Caco-2 (cell line): ENCODE measurements at regions of chrX and their contacts with region 1.

Region 1: DNA sequence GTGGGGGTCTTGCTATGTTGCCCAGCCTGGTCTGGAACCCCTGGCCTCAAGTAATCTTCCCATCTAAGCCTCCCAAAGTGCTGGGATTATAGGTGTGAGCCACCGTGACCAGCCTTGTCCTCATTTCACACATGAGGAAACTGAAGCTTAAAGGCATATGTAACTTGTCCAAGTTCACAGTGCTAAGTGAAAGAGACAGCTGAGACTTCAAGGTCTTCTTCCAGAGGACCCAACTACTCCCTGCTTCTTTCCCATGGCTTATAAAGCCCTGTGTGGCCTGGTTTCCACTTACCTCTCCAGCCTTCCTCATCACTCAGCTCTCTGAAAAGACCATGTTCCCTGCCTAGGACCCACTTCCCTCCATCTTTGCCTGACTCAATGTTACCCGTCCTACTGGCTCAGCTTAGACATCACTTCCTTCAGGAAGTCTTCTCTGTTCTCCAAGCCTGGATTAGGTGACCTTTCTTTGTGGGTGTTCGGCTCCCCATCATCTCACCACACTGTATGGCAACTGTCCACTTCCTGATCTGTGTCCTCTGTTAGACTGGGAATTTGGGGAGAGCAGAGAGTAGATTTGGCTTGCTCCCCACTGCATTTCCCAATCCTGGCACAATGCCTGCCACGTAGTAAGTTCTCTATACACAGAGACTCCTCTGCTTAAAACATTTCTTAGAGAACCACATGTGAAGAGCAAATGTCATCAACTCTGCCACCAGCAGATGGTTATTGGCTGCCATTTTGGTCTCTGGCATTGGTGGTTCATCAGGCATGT is 30.4 kb upstream of the LAMP2 start:
- DNase-seq: no peak
- H3K4me3 ChIP-seq: no peak overlapping the region
- H3K4me3 Mint-ChIP-seq: no peak overlapping the region
- H3K27ac Mint-ChIP-seq: no peak overlapping the region
- H3K4me1 ChIP-seq: no peaks in the 10 kb centered on the region
- H3K4me1 Mint-ChIP-seq: peaks cover 7% of the 10 kb centered on the region
- H3K27me3 ChIP-seq: no peaks in the 10 kb centered on the region
- H3K27me3 Mint-ChIP-seq: no peaks in the 10 kb centered on the region
- CTCF ChIP-seq: no peak

Region 2: GRCh38 chrX:120358737-120359456 is 140.6 kb before region 1 on chrX:
- CTCF ChIA-PET with region 1: no interaction called
- POLR2A ChIA-PET with region 1: no interaction called
- intact Hi-C with region 1: no loop called
- DNase-seq: no peak
- H3K4me3 ChIP-seq: no peak overlapping the region
- H3K4me3 Mint-ChIP-seq: no peak overlapping the region
- H3K27ac Mint-ChIP-seq: no peak overlapping the region
- H3K4me1 ChIP-seq: no peaks in the 10 kb centered on the region
- H3K4me1 Mint-ChIP-seq: no peaks in the 10 kb centered on the region
- H3K27me3 ChIP-seq: no peaks in the 10 kb centered on the region
- H3K27me3 Mint-ChIP-seq: peaks cover 7% of the 10 kb centered on the region
- CTCF ChIP-seq: no peak

Region 3: DNA sequence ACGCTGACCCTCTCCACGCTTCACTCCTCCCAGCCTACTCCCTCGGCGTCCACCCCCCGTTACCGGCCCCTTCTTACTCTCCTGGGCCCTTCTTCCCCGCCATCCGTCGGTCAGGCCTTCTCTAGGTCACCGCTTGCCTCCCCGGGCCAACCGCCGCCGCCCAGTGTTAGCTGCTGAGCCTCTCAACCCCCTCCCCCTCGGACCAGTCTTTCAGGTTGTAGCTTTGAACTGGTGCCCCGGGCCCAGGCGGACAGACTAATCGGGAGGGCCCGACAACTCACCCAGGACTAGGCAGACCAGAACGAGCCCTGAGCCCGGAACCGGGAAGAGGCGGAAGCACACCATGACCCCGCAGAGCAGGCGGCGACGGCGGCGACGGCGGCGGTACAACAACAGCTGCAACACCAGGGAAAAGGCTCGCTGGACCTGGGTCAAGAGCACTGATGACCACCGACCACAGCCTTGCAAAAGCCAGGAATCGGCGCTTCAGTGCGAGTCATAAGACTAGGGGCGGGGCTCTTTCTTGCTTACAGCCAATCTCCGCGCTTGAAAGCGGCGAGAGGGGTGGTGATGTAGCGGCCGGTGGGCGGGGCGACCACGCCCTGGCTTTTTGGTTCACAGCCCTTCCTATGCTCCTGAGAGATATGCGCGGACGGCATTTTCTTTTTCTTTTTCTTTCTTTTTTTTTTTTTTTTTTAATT is 30.5 kb before region 1 on chrX and contains the start of gene LAMP2:
- CTCF ChIA-PET with region 1: no interaction called
- POLR2A ChIA-PET with region 1: no interaction called
- intact Hi-C with region 1: no loop called
- DNase-seq: peak; percentile 89 to 90
- H3K4me3 ChIP-seq: peak within 1 kb of the TSS; percentile 67
- H3K4me3 Mint-ChIP-seq: peak within 1 kb of the TSS; percentile 95
- H3K27ac Mint-ChIP-seq: peak within 1 kb of the TSS; percentile 93
- H3K4me1 ChIP-seq: peaks cover 5% of the 10 kb centered on the region; the same call in 1 of the 2 replicates
- H3K4me1 Mint-ChIP-seq: no peaks in the 10 kb centered on the region
- H3K27me3 ChIP-seq: no peaks in the 10 kb centered on the region
- H3K27me3 Mint-ChIP-seq: peaks cover 1% of the 10 kb centered on the region
- CTCF ChIP-seq: no peak
- total RNA-seq, gene LAMP2: 101 and 119 TPM in 2 replicates

Region 4: DNA sequence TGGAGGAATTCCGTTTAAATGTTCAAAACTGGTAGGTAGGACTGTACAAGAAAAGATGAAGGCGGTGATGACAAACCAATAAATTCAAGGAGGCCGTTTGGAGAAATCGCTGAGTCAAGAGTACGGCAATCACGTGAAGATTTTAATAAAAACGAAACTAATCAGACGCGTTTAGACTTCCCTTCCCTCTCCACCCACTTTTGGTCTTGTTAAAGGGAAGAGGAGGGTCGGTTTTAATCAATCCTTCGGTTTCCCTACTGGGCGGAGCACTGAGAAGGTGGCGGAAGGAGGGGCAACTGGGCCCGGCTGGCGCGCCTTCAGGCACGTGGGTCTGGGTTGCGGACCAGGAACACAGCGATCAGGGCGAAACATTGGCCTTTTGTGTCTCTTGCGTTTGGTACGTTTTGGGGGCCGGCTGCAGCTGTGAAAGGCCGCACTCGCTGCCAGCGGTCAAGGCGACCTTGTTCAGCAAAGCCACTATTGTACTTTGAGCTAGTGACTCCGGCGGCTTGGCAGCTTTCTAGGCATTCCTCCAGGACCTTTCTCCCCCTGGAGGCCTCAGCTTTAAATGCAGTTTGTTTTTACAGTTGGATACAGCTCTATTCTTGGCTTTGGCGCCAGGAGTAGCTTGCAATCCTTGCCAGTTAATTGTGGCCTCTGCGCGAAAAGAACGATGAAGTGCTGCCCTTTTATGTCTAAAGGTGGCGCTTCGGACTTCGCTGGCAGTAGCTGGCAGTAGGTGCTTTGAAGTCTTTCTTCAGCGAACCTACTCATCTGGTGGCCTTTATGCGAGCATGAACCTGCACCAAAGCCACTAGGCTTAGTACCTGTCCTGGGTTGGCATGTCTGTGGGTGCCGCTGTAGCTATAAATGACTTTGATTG is 13.6 kb before region 1 on chrX:
- CTCF ChIA-PET with region 1: no interaction called
- POLR2A ChIA-PET with region 1: no interaction called
- intact Hi-C with region 1: no loop called
- DNase-seq: peak; percentile 77 to 78
- H3K4me3 ChIP-seq: peak overlapping the region; percentile 29
- H3K4me3 Mint-ChIP-seq: peak overlapping the region; percentile 65
- H3K27ac Mint-ChIP-seq: peak overlapping the region; percentile 70
- H3K4me1 ChIP-seq: no peaks in the 10 kb centered on the region; the same call in 1 of the 2 replicates
- H3K4me1 Mint-ChIP-seq: no peaks in the 10 kb centered on the region
- H3K27me3 ChIP-seq: no peaks in the 10 kb centered on the region
- H3K27me3 Mint-ChIP-seq: no peaks in the 10 kb centered on the region
- CTCF ChIP-seq: peak; percentile 11 to 40

Region 5: GRCh38 chrX:120664081-120664480 is 164.6 kb after region 1 on chrX:
- CTCF ChIA-PET with region 1: interaction called, 3 read pairs
- POLR2A ChIA-PET with region 1: no interaction called
- intact Hi-C with region 1: loop called (anchors 1 kb)
- DNase-seq: no peak
- H3K4me3 ChIP-seq: no peak overlapping the region
- H3K4me3 Mint-ChIP-seq: no peak overlapping the region
- H3K27ac Mint-ChIP-seq: no peak overlapping the region
- H3K4me1 ChIP-seq: no peaks in the 10 kb centered on the region
- H3K4me1 Mint-ChIP-seq: no peaks in the 10 kb centered on the region
- H3K27me3 ChIP-seq: no peaks in the 10 kb centered on the region
- H3K27me3 Mint-ChIP-seq: no peaks in the 10 kb centered on the region
- CTCF ChIP-seq: peak in 1 of 2 experiments; percentile 24

Region 6: GRCh38 chrX:120769576-120770341 is 270.3 kb after region 1 on chrX:
- CTCF ChIA-PET with region 1: no interaction called
- POLR2A ChIA-PET with region 1: no interaction called
- intact Hi-C with region 1: loop called (anchors 1 kb)
- DNase-seq: no peak
- H3K4me3 ChIP-seq: no peak overlapping the region
- H3K4me3 Mint-ChIP-seq: no peak overlapping the region
- H3K27ac Mint-ChIP-seq: no peak overlapping the region
- H3K4me1 ChIP-seq: no peaks in the 10 kb centered on the region
- H3K4me1 Mint-ChIP-seq: no peaks in the 10 kb centered on the region
- H3K27me3 ChIP-seq: no peaks in the 10 kb centered on the region
- H3K27me3 Mint-ChIP-seq: no peaks in the 10 kb centered on the region
- CTCF ChIP-seq: no peak